ENCODE measurements at regions of chr2 and their contacts with region 1.

Region 1: GRCh38 chr2:155377266-155377680 is 678.8 kb downstream of the KCNJ3 start:
- DNase-seq: no peak
- H3K4me3 ChIP-seq: no peak overlapping the region
- H3K27ac ChIP-seq: no peak overlapping the region
- H3K27me3 ChIP-seq: no peaks in the 10 kb centered on the region
- CTCF ChIP-seq: peak; percentile 26 to 84 (median 63)

Region 2: GRCh38 chr2:155218945-155219344 is 158.3 kb before region 1 on chr2:
- intact Hi-C with region 1: no loop called
- DNase-seq: no peak
- H3K4me3 ChIP-seq: no peak overlapping the region
- H3K27ac ChIP-seq: no peak overlapping the region
- H3K27me3 ChIP-seq: no peaks in the 10 kb centered on the region
- CTCF ChIP-seq: no peak

Region 3: GRCh38 chr2:155356250-155356649 is 21.0 kb before region 1 on chr2:
- intact Hi-C with region 1: no loop called
- DNase-seq: no peak
- H3K4me3 ChIP-seq: no peak overlapping the region
- H3K27ac ChIP-seq: no peak overlapping the region
- H3K27me3 ChIP-seq: no peaks in the 10 kb centered on the region
- CTCF ChIP-seq: no peak

Region 4: GRCh38 chr2:155815886-155816285 is 438.6 kb after region 1 on chr2:
- intact Hi-C with region 1: loop called (anchors 5 to 10 kb)
- DNase-seq: peak in 4 of 10 donors; percentile 29 to 52 (median 34)
- H3K4me3 ChIP-seq: no peak overlapping the region
- H3K27ac ChIP-seq: no peak overlapping the region
- H3K27me3 ChIP-seq: no peaks in the 10 kb centered on the region
- CTCF ChIP-seq: peak in 51 of 56 donors; percentile 21 to 75 (median 50)

Region 5: DNA sequence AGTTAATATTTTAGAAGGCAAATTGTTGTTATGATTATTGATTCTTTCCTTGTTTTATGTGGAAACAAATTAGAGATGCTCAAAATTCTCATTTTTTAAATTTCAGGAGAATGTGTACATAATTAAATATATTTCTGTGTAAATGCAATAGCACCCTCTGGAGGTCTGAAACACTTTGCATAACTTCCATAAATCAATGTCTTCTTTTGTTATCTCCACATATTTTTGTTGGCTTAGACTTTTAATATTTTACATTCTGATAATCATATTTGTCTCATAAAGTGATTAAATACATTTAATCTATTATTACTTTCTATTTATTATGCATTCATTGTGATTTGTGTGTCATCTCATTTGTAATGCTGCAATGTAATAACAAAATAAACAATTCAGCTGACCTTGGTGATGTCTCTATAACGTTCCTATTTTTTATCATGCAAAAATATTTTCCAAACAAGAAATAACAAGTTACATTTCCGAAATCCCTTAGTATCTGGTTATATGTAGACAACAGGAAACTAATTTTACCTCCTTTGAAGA is 1678.5 kb after region 1 on chr2:
- intact Hi-C with region 1: loop called in 1 of 2 experiments (anchors 10 kb)
- DNase-seq: no peak
- H3K4me3 ChIP-seq: peak overlapping the region in 32 of 59 donors; percentile 1 to 47 (median 20)
- H3K27ac ChIP-seq: peak overlapping the region in 51 of 59 donors; percentile 3 to 87 (median 66)
- H3K27me3 ChIP-seq: no peaks in the 10 kb centered on the region
- CTCF ChIP-seq: peak; percentile 54 to 90 (median 70)

Region 6: DNA sequence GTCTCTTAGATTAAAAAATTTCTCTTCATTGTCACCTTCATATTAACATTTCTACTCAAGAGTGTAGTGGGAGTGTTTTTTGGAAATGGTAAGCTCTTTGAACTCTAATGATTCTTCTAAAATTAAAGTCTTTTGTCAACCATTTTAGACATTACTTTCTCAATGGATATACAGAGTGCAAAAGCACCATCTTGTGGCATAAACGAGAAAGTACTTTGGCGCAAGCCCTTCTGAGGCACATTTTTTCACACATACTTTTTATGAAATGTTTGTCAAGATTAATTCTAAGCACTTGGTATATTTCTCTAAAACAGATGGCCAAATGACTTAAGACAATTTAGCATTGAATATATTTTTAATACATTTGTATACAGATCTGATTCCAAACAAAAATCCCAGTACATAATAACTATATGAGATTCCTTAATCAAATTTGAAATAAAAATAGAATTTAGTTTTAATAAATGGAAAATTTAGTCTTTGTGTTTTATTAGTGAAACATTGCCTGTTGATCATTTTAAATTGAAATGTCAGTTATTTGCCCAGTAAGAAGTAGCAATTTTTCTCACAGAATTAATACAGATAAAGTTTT is 1816.9 kb after region 1 on chr2:
- intact Hi-C with region 1: loop called in 1 of 2 experiments (anchors 5 kb)
- DNase-seq: peak in 2 of 10 donors; percentile 37 to 44
- H3K4me3 ChIP-seq: no peak overlapping the region
- H3K27ac ChIP-seq: no peak overlapping the region
- H3K27me3 ChIP-seq: peaks cover 0 to 4% (median 0%) of the 10 kb centered on the region in 45 donors
- CTCF ChIP-seq: peak; percentile 62 to 98 (median 78)